ENCODE measurements at regions of chr20 and their contacts with region 1.

Region 1: DNA sequence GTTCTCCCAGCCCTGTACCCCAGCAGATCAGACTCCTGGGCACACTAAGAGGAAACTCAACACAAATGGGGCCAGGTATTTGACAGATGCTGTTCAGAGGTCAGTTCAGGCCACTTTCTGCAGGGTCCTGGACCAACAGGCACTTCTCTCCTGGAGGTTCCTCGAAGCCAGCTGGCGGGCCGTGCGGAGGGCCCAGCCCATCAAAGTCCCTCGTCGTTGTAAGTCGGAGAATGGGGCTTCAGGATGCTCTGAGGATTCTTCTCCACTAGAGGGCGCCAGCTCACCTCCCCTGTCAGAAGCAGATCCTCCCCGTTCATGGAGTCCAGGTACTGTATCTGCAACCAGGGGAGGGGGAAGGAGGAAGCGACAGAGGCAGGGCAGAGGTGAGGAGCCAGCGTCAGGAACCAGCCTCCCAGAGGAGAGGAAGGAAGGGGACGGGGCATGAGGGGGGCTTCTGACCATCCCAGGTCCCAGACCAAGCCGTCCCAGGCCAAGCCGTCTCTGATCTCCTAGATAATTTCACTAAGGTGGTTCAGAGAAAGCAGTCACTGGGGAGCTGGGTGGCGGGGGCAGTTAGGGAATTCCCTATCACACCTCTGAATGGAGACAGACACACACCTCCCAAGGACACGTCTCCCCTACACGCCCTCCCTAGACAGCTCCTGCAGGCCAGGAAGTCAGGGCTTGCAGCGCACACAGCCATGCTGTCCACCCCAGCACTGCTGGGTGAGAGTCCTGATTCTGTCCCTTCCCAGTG is 11.7 kb upstream of the FAM83C start:
- DNase-seq: peak; percentile 31
- ATAC-seq: peak; percentile 98
- H3K4me3 ChIP-seq: no peak overlapping the region
- H3K27ac ChIP-seq: no peak overlapping the region
- H3K4me1 ChIP-seq: peaks cover 3% of the 10 kb centered on the region
- H3K27me3 ChIP-seq: no peaks in the 10 kb centered on the region
- CTCF ChIP-seq: peak; percentile 93 to 94 (median 94)
- EP300 ChIP-seq: no peak
- POLR2A ChIP-seq: no peak
- RAD21 ChIP-seq: peak; percentile 92

Region 2: GRCh38 chr20:35284267-35284991 is 19.5 kb before region 1 on chr20 and contains the start of gene EIF6:
- CTCF ChIA-PET with region 1: interaction called, 14 read pairs
- POLR2A ChIA-PET with region 1: interaction called, 4 read pairs
- RAD21 ChIA-PET with region 1: interaction called, 5 read pairs
- SMC1A ChIA-PET with region 1: interaction called, 3 read pairs
- in situ Hi-C with region 1: no loop called
- intact Hi-C with region 1: no loop called
- DNase-seq: peak; percentile 36
- ATAC-seq: peak; percentile 95
- H3K4me3 ChIP-seq: peak within 1 kb of the TSS; percentile 100
- H3K27ac ChIP-seq: peak within 1 kb of the TSS; percentile 49
- H3K4me1 ChIP-seq: peaks cover 3% of the 10 kb centered on the region; the same call in 1 of the 2 replicates
- H3K27me3 ChIP-seq: no peaks in the 10 kb centered on the region
- CTCF ChIP-seq: no peak
- EP300 ChIP-seq: no peak
- POLR2A ChIP-seq: peak; percentile 63
- RAD21 ChIP-seq: no peak
- polyA plus RNA-seq, gene EIF6: 405 to 607 TPM

Region 3: DNA sequence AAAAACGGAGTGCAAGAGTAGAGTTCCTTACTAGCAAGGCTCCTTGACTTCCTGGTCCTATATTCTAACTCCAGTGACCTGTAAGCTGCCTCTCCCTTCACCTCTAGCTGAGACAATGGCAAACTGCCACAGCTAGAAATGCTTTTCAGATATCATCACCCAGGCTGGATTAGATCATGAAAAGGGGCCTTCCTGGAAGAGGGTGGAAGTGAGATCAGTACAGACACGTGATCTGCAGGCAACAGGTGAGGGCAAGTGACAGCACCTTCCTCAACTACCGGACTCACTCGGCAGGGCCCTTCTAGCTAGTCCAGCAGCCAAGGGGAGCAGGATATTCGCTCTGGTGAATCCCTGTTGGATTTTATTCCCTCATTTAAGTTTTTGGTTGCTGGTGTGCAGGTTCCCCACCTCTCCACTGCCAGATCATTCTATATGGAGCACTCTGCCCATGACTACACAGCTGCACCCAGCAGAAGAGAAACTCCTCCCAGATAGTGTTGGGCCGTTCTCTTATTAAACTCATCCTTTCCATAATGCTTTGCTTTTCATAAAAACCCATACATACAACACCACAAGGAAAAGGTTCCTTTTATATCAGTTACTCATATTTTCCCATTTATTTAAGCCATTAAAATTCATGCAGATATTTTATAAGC is 14.7 kb after region 1 on chr20:
- CTCF ChIA-PET with region 1: interaction called, 18 read pairs
- POLR2A ChIA-PET with region 1: no interaction called
- RAD21 ChIA-PET with region 1: interaction called, 3 read pairs
- SMC1A ChIA-PET with region 1: no interaction called
- in situ Hi-C with region 1: no loop called
- intact Hi-C with region 1: no loop called
- DNase-seq: no peak
- ATAC-seq: no peak
- H3K4me3 ChIP-seq: no peak overlapping the region
- H3K27ac ChIP-seq: no peak overlapping the region
- H3K4me1 ChIP-seq: no peaks in the 10 kb centered on the region
- H3K27me3 ChIP-seq: no peaks in the 10 kb centered on the region
- CTCF ChIP-seq: no peak
- EP300 ChIP-seq: no peak
- POLR2A ChIP-seq: no peak
- RAD21 ChIP-seq: no peak

Region 4: GRCh38 chr20:35329435-35330139 is 25.7 kb after region 1 on chr20:
- CTCF ChIA-PET with region 1: interaction called, 57 read pairs
- POLR2A ChIA-PET with region 1: interaction called, 4 read pairs
- RAD21 ChIA-PET with region 1: interaction called, 6 read pairs
- SMC1A ChIA-PET with region 1: interaction called, 7 read pairs
- in situ Hi-C with region 1: no loop called
- intact Hi-C with region 1: loop called (anchors 1 kb)
- DNase-seq: no peak
- ATAC-seq: peak; percentile 94
- H3K4me3 ChIP-seq: no peak overlapping the region
- H3K27ac ChIP-seq: no peak overlapping the region
- H3K4me1 ChIP-seq: no peaks in the 10 kb centered on the region
- H3K27me3 ChIP-seq: no peaks in the 10 kb centered on the region
- CTCF ChIP-seq: peak; percentile 51 to 66 (median 64)
- EP300 ChIP-seq: no peak
- POLR2A ChIP-seq: no peak
- RAD21 ChIP-seq: peak; percentile 43; the same call in 1 of the 2 replicates

Region 5: GRCh38 chr20:35447082-35447789 is 143.3 kb after region 1 on chr20:
- CTCF ChIA-PET with region 1: interaction called, 81 read pairs
- POLR2A ChIA-PET with region 1: no interaction called
- RAD21 ChIA-PET with region 1: interaction called, 8 read pairs
- SMC1A ChIA-PET with region 1: interaction called, 9 read pairs
- in situ Hi-C with region 1: loop called (anchors 5 kb)
- intact Hi-C with region 1: loop called (anchors 1 kb)
- DNase-seq: peak; percentile 40
- ATAC-seq: peak; percentile 99
- H3K4me3 ChIP-seq: peak overlapping the region; percentile 80
- H3K27ac ChIP-seq: no peak overlapping the region
- H3K4me1 ChIP-seq: no peaks in the 10 kb centered on the region; the same call in 1 of the 2 replicates
- H3K27me3 ChIP-seq: no peaks in the 10 kb centered on the region
- CTCF ChIP-seq: peak; percentile 76 to 98 (median 93)
- EP300 ChIP-seq: no peak
- POLR2A ChIP-seq: no peak
- RAD21 ChIP-seq: peak; percentile 62

Region 6: DNA sequence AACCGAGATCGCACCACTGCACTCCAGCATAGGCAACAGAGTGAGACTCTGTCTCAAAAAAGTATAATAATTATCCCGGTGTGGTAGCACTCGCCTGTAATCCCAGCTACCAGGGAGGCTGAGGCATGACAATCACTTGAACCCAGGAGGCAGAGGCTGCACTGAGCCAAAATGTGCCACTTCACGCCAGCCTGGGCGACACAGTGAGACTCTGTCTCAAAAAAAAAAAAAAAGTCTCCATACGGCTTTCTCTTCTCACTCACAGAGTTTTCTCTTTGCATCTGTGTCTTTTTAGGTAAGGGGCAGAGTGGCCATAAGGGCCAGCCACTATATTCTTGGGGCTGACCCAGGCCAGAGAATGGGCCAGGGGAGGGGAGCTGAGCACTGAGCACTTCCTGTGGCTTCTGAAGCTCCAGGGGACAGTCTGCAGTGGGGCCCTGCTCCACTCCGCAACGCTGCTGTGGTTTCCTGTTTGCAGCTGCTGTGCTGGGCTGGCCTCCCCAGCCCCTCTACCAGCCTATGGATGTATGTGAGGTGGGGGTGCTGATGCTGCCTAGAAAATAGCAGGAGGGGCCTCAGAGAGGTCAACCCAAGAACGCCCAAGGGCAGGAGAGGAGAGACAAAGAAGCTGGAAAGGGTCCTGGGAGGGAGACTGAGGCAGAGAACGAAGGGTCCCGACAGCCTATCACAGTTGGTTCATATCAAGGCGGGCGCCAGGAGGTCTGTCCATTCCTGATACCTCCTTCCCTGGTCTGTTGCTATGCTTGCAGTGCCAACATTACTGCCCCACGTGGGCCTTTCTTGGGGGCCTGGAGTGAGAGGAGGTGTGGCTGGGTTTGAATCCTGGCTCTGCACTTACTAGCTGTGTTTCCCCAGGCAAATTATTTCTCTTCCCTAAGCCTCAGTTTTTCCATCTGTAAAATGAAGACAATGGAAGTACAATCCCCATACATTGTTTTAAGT is 1326.1 kb after region 1 on chr20:
- CTCF ChIA-PET with region 1: no interaction called
- POLR2A ChIA-PET with region 1: no interaction called
- RAD21 ChIA-PET with region 1: no interaction called
- SMC1A ChIA-PET with region 1: no interaction called
- in situ Hi-C with region 1: no loop called
- intact Hi-C with region 1: no loop called
- DNase-seq: no peak
- ATAC-seq: peak; percentile 97
- H3K4me3 ChIP-seq: no peak overlapping the region
- H3K27ac ChIP-seq: peak overlapping the region; percentile 37; the same call in 1 of the 2 replicates
- H3K4me1 ChIP-seq: peaks cover 12% of the 10 kb centered on the region
- H3K27me3 ChIP-seq: no peaks in the 10 kb centered on the region
- CTCF ChIP-seq: no peak
- EP300 ChIP-seq: no peak
- POLR2A ChIP-seq: no peak
- RAD21 ChIP-seq: no peak

Measured in GM12878 (cell line).